ENCODE measurements at regions of chr20 and their contacts with region 1.

Region 1: DNA sequence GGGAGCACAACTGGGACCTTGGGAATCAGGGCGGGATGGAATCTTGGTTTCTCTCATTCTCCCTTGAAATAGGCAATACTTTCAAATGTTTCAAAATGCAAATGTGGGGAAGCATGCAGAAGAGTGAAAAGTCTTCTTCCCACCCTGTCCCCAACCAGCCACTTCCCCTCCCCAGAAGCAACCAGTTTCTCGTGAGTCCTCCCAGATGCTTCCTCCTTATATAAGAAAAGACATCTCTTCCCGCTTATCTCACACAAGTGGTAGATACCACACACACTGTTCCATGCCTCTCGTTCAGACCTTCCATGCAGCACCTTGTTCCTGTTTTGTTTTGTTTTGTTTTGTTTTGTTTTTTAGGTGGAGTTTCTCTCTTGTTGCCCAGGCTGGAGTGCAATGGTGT is 25.1 kb downstream of the HCK start:
- DNase-seq: no peak
- ATAC-seq: no peak
- H3K4me3 ChIP-seq: no peak overlapping the region
- H3K27ac ChIP-seq: no peak overlapping the region
- H3K4me1 ChIP-seq: peaks cover 0 to 12% (median 0%) of the 10 kb centered on the region in 12 donors
- H3K27me3 ChIP-seq: peaks cover 0 to 3% (median 0%) of the 10 kb centered on the region in 9 donors
- CTCF ChIP-seq: no peak
- POLR2A ChIP-seq: no peak

Region 2: DNA sequence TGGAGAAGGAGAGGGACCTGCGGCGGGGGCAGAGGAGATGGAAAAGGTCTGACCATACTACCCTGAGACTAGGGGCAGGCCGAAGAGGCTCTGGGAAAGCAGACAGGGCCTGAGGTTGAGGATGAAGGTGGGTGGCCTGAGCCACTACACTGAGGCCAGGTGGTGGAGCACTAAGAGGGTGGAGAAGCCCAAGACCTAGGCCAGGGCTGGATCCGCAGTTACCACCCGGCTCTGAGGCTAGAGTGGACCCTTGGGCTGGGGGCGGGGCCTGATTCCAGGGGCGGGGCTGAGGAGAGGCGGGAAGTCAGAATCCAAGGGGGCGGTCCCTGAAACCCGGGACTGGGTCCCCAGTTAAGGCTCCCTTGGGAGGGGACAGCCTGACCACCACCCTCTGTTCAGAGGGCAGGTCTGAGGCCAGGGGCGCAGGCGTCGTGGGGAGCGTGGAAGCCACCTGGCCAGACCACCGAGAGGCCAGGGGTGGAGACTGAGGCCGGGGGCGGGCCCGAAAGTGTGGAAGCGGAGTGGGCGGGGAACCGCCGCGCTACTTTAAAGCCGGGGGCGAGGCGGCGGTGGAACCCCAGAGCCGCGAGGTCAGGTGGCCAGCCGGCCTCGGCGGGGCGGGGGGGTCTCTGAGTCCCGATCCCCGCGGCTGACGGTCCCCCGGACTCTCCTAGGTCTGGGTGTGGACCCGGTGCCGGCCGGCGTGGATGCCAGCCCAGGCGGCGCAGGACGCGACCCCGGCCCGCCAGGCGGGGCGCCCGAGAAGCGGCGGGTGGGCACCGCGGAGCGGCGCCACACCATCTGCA is 58.7 kb before region 1 on chr20:
- intact Hi-C with region 1: no loop called
- DNase-seq: peak; percentile 58 to 76 (median 67)
- ATAC-seq: peak in 3 of 4 donors; percentile 72 to 85 (median 81)
- H3K4me3 ChIP-seq: peak overlapping the region; percentile 23 to 67 (median 54)
- H3K27ac ChIP-seq: peak overlapping the region in 9 of 12 donors; percentile 32 to 68 (median 57)
- H3K4me1 ChIP-seq: peaks cover 0 to 42% (median 14%) of the 10 kb centered on the region in 12 donors
- H3K27me3 ChIP-seq: peaks cover 0 to 70% (median 33%) of the 10 kb centered on the region in 9 donors
- CTCF ChIP-seq: no peak
- POLR2A ChIP-seq: peak in 1 of 2 donors; percentile 70

Region 3: DNA sequence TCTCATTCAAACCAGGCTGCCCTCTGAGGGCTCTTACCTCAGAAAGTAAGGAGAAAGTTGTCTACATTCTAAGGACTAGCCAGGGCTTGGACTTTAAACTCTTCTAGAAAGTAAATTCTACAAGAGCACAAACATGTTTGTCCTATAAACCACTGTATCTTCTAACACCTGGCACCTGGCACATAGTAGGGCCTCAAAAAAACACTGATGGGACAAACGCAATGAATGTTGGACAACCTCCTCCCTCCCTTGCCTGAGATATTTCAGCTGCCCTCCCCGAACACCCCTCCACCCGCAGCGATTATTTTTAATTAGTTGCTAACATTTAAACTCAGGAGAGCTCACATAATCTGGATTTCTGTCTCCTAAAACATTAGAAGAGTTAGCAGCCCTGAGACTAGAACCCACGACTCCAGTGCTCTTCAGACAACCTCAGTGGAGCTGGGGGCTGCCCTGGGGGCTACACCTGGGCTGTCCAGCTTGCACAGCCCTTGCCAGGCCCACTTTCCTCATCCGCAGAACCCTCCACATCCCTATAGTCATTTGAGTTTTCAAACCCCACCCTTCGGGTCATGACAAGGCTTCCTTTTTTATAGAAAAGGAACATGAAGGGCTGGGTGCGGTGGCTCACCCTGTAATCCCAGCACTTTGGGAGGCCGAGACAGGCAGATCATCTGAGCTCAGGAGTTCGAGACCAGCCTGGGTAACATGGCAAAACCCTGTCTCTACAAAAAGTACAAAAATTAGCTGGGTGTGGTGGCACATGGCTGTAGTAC is 20.3 kb before region 1 on chr20:
- intact Hi-C with region 1: loop called in 1 of 10 experiments (anchors 2 kb)
- DNase-seq: no peak
- ATAC-seq: peak in 1 of 4 donors; percentile 32
- H3K4me3 ChIP-seq: no peak overlapping the region
- H3K27ac ChIP-seq: peak overlapping the region in 1 of 12 donors; percentile 57
- H3K4me1 ChIP-seq: peaks cover 0 to 38% (median 6%) of the 10 kb centered on the region in 12 donors
- H3K27me3 ChIP-seq: peaks cover 14 to 61% (median 29%) of the 10 kb centered on the region in 9 donors
- CTCF ChIP-seq: no peak
- POLR2A ChIP-seq: no peak

Region 4: GRCh38 chr20:32132911-32133549 is 55.8 kb after region 1 on chr20:
- intact Hi-C with region 1: loop called in 1 of 10 experiments (anchors 10 kb)
- DNase-seq: no peak
- ATAC-seq: no peak
- H3K4me3 ChIP-seq: no peak overlapping the region
- H3K27ac ChIP-seq: no peak overlapping the region
- H3K4me1 ChIP-seq: peaks cover 0 to 14% (median 2%) of the 10 kb centered on the region in 12 donors
- H3K27me3 ChIP-seq: no peaks in the 10 kb centered on the region
- CTCF ChIP-seq: no peak
- POLR2A ChIP-seq: no peak